AG04450 (cell line): ENCODE measurements at regions of chr18 and their contacts with region 1.

Region 1: GRCh38 chr18:70431203-70431624 is 142.4 kb downstream of the SOCS6 start:
- DNase-seq: peak; percentile 47
- H3K4me3 ChIP-seq: no peak overlapping the region
- H3K27ac ChIP-seq: peak overlapping the region; percentile 11
- H3K27me3 ChIP-seq: no peaks in the 10 kb centered on the region
- CTCF ChIP-seq: no peak

Region 2: DNA sequence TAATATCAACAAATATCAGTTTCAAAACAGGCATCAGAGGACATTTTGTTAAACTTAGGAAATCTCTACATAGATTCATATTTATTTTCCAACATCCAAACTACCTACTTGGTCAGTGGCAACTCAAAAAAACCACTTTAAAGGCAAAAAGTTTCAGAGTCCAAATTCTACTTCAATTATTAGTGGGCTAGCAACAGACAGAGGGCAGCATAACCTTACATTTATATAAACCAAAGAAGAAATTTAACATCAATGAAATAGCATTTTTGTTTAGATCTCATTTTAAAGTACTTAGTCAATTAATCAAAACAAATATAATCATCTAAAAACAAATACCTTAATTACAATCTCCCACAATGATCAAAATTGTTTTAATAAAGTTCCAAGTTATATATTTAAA is 259.0 kb before region 1 on chr18:
- CTCF ChIA-PET with region 1: interaction called, 61 read pairs
- POLR2A ChIA-PET with region 1: no interaction called
- DNase-seq: no peak
- H3K4me3 ChIP-seq: no peak overlapping the region
- H3K27ac ChIP-seq: no peak overlapping the region
- H3K27me3 ChIP-seq: no peaks in the 10 kb centered on the region
- CTCF ChIP-seq: peak; percentile 63

Region 3: DNA sequence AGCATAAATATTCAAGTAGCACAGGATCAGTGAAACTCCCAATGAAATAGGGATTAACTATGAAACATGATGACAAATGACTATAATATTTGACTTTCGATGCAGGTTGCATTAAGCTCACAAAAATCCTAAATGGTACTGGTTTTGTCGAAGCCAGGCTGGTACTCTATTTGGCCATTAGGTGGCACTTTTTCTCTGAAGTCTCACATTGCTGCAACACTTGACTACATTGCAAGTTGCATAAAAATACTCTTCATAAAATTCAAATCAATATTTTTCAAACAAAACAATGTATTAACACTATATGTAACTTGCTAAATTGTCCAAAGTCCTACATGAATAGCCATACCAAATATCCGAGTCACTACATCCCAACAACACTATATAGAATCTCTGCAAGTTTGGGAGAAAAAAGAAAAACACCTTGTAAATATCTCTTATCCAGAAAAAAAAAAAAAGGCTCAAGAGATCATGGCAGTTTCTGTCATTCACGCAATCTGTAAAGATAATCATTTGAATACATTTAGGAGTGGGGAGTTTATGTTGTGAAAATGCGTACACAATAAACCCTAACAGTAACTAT is 235.3 kb before region 1 on chr18:
- CTCF ChIA-PET with region 1: interaction called, 302 read pairs
- POLR2A ChIA-PET with region 1: no interaction called
- DNase-seq: no peak
- H3K4me3 ChIP-seq: no peak overlapping the region
- H3K27ac ChIP-seq: no peak overlapping the region
- H3K27me3 ChIP-seq: no peaks in the 10 kb centered on the region
- CTCF ChIP-seq: peak; percentile 86

Region 4: GRCh38 chr18:70289351-70290330 is 141.6 kb before region 1 on chr18:
- CTCF ChIA-PET with region 1: interaction called, 10 read pairs
- POLR2A ChIA-PET with region 1: no interaction called
- DNase-seq: no peak
- H3K4me3 ChIP-seq: peak overlapping the region; percentile 83
- H3K27ac ChIP-seq: peak overlapping the region; percentile 63
- H3K27me3 ChIP-seq: no peaks in the 10 kb centered on the region
- CTCF ChIP-seq: no peak

Region 5: GRCh38 chr18:70301667-70302066 is 129.5 kb before region 1 on chr18:
- CTCF ChIA-PET with region 1: interaction called, 13 read pairs
- POLR2A ChIA-PET with region 1: no interaction called
- DNase-seq: no peak
- H3K4me3 ChIP-seq: no peak overlapping the region
- H3K27ac ChIP-seq: no peak overlapping the region
- H3K27me3 ChIP-seq: no peaks in the 10 kb centered on the region
- CTCF ChIP-seq: no peak

Region 6: GRCh38 chr18:70448588-70448987 is 17.4 kb after region 1 on chr18:
- CTCF ChIA-PET with region 1: interaction called, 30 read pairs
- POLR2A ChIA-PET with region 1: interaction called, 3 read pairs
- DNase-seq: no peak
- H3K4me3 ChIP-seq: no peak overlapping the region
- H3K27ac ChIP-seq: no peak overlapping the region
- H3K27me3 ChIP-seq: no peaks in the 10 kb centered on the region
- CTCF ChIP-seq: no peak